ENCODE measurements at regions of chr2 and their contacts with region 1.

Region 1: DNA sequence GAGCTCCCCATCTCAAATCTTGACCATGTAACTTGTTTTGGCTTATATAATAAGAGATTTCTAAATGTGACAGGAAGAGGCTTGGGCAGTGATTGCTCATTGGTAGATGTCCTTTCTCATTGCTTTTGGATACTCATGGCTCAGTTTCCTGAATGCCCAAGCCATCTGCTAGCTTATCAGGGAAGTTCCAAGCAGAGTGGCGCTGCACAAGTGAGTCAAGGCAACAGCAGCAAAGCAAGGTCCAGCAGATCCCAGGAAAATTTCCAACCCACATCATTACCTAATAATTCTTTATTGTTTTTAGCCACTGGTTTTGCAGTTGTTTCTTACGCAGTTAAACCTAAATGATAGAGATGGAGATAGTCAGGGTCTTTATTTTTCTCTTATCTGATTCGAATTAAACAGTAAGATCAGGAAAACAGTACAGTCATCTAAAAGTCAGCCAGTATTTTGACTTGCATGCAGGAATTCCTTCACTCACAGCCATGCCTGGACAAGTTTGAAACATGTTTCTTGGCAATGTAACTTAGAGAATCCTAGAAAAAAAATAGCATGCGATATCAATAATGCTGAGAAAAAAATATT is 349.7 kb upstream of the TMEFF2 start:
- DNase-seq: peak; percentile 76
- H3K4me3 ChIP-seq: peak overlapping the region in 2 of 3 experiments; percentile 0 to 13
- H3K27ac ChIP-seq: peak overlapping the region; percentile 60
- H3K4me1 ChIP-seq: peaks cover 6% of the 10 kb centered on the region
- H3K27me3 ChIP-seq: no peaks in the 10 kb centered on the region
- CTCF ChIP-seq: no peak

Region 2: DNA sequence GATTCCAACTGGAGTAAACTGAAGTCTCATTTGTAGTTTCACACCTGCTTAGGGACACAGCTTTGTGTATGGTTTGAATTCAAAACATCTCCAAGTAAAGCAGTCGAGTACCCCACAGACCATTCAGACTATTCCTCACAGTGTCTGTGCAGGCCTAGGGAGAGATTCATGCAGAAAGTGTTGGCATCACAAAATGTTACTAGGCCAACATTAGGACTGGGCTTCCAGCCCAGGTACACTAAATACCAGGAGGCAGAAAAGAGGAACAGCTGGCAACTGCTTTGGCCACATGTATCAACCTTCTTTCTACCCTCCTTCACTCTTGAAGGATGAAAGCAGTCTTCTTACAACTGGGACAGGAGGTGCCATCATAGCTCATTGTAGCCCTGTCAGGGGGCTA is 79.3 kb before region 1 on chr2:
- CTCF ChIA-PET with region 1: no interaction called
- dilution Hi-C with region 1: no loop called
- in situ Hi-C with region 1: no loop called
- intact Hi-C with region 1: no loop called
- DNase-seq: no peak
- H3K4me3 ChIP-seq: no peak overlapping the region
- H3K27ac ChIP-seq: no peak overlapping the region
- H3K4me1 ChIP-seq: no peaks in the 10 kb centered on the region
- H3K27me3 ChIP-seq: no peaks in the 10 kb centered on the region
- CTCF ChIP-seq: no peak

Region 3: GRCh38 chr2:192500550-192501213 is 43.8 kb before region 1 on chr2:
- CTCF ChIA-PET with region 1: no interaction called
- dilution Hi-C with region 1: no loop called
- in situ Hi-C with region 1: no loop called
- intact Hi-C with region 1: loop called (anchors 5 kb)
- DNase-seq: peak; percentile 96
- H3K4me3 ChIP-seq: no peak overlapping the region
- H3K27ac ChIP-seq: no peak overlapping the region
- H3K4me1 ChIP-seq: peaks cover 34% of the 10 kb centered on the region
- H3K27me3 ChIP-seq: no peaks in the 10 kb centered on the region
- CTCF ChIP-seq: no peak